CD8-positive, alpha-beta memory T cell (primary cell): ENCODE measurements at regions of chr6 and their contacts with region 1.

Region 1: DNA sequence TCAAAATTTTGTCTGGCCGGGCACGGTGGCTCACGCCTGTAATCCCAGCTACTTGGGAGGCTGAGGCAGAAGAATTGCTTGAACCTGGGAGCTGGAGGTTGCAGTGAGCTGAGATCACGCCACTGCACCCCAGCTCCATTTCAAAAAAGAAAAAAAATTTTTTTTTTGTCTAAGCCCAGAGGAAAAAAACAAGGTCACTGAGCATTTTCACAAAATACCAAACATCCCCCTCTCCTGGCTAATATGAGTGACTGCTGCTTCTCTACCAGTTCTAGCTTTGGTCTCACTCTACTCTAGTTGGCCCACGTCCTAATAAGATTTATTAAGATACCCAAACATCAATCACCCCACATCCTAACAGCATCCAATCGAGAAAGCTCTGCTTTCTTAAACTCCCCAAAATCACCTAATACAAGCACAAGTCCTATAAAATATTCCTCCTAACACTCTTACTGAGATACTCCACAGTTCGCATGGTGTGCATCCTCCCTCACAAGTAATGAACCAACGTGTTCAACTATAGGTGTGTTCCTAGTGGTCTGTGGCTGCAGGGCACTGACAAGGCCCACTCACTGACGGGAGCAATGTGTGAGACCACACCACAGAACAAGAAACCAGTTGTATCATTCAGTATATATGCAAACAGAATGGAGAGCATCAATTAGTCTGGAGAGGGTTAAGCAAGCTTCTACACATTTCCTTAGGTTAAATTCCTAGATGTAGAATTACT is 64.2 kb downstream of the FKBP5 start:
- DNase-seq: peak in 2 of 5 donors; percentile 46 to 70
- H3K4me3 ChIP-seq: no peak overlapping the region
- H3K4me3 Mint-ChIP-seq: peak overlapping the region in 3 of 7 donors; percentile 4 to 42 (median 12)
- H3K27ac ChIP-seq: no peak overlapping the region
- H3K27ac Mint-ChIP-seq: peak overlapping the region in 7 of 8 donors; percentile 6 to 89 (median 80)
- H3K4me1 ChIP-seq: peaks cover 37% of the 10 kb centered on the region
- H3K4me1 Mint-ChIP-seq: peaks cover 26 to 46% (median 26%) of the 10 kb centered on the region in 3 donors
- H3K27me3 ChIP-seq: no peaks in the 10 kb centered on the region
- H3K27me3 Mint-ChIP-seq: no peaks in the 10 kb centered on the region

Region 2: DNA sequence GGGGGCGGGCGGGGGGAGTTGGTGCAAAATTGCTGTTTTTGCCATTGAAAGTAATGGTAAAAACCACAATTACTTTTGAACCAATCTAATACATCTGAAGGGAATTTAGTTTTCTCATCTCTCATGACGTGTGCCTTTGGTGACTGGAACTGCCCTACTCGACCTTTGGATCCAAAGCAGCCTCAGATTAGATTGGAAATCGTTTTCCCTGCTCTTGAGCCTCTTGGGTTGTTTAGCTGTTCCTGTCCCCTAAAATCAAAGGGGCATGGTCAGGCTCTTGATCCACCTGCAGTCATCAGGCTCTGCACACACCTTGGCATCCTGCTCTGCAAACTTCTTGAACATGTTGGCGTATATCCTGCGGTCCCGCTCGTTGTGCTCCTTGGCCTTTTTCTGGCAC is 47.8 kb before region 1 on chr6:
- CTCF ChIA-PET with region 1: interaction called, 144 read pairs
- POLR2A ChIA-PET with region 1: no interaction called
- DNase-seq: no peak
- H3K4me3 ChIP-seq: no peak overlapping the region
- H3K4me3 Mint-ChIP-seq: no peak overlapping the region
- H3K27ac ChIP-seq: no peak overlapping the region
- H3K27ac Mint-ChIP-seq: no peak overlapping the region
- H3K4me1 ChIP-seq: peaks cover 2% of the 10 kb centered on the region
- H3K4me1 Mint-ChIP-seq: peaks cover 0 to 4% (median 4%) of the 10 kb centered on the region in 3 donors
- H3K27me3 ChIP-seq: no peaks in the 10 kb centered on the region
- H3K27me3 Mint-ChIP-seq: no peaks in the 10 kb centered on the region

Region 3: GRCh38 chr6:35583893-35584688 is 40.4 kb before region 1 on chr6:
- CTCF ChIA-PET with region 1: interaction called, 144 read pairs
- POLR2A ChIA-PET with region 1: interaction called, 3 read pairs
- DNase-seq: peak; percentile 55 to 79 (median 64)
- H3K4me3 ChIP-seq: no peak overlapping the region
- H3K4me3 Mint-ChIP-seq: peak overlapping the region in 1 of 7 donors; percentile 7
- H3K27ac ChIP-seq: no peak overlapping the region
- H3K27ac Mint-ChIP-seq: peak overlapping the region; percentile 43 to 77 (median 68)
- H3K4me1 ChIP-seq: peaks cover 65% of the 10 kb centered on the region
- H3K4me1 Mint-ChIP-seq: peaks cover 36 to 58% (median 43%) of the 10 kb centered on the region in 3 donors
- H3K27me3 ChIP-seq: no peaks in the 10 kb centered on the region
- H3K27me3 Mint-ChIP-seq: no peaks in the 10 kb centered on the region

Region 4: GRCh38 chr6:35590622-35591066 is 33.9 kb before region 1 on chr6:
- CTCF ChIA-PET with region 1: interaction called, 144 read pairs
- POLR2A ChIA-PET with region 1: interaction called, 3 read pairs
- DNase-seq: no peak
- H3K4me3 ChIP-seq: no peak overlapping the region
- H3K4me3 Mint-ChIP-seq: peak overlapping the region in 1 of 7 donors; percentile 44
- H3K27ac ChIP-seq: no peak overlapping the region
- H3K27ac Mint-ChIP-seq: peak overlapping the region in 7 of 8 donors; percentile 47 to 85 (median 68)
- H3K4me1 ChIP-seq: peaks cover 93% of the 10 kb centered on the region
- H3K4me1 Mint-ChIP-seq: peaks cover 68 to 92% (median 82%) of the 10 kb centered on the region in 3 donors
- H3K27me3 ChIP-seq: no peaks in the 10 kb centered on the region
- H3K27me3 Mint-ChIP-seq: no peaks in the 10 kb centered on the region

Region 5: GRCh38 chr6:35601331-35602132 is 23.0 kb before region 1 on chr6:
- CTCF ChIA-PET with region 1: interaction called, 139 read pairs
- POLR2A ChIA-PET with region 1: interaction called, 19 read pairs
- DNase-seq: peak; percentile 23 to 92 (median 83)
- H3K4me3 ChIP-seq: peak overlapping the region; percentile 58
- H3K4me3 Mint-ChIP-seq: peak overlapping the region; percentile 76 to 85 (median 81)
- H3K27ac ChIP-seq: peak overlapping the region; percentile 44
- H3K27ac Mint-ChIP-seq: peak overlapping the region; percentile 71 to 97 (median 86)
- H3K4me1 ChIP-seq: peaks cover 83% of the 10 kb centered on the region
- H3K4me1 Mint-ChIP-seq: peaks cover 69 to 92% (median 84%) of the 10 kb centered on the region in 3 donors
- H3K27me3 ChIP-seq: no peaks in the 10 kb centered on the region
- H3K27me3 Mint-ChIP-seq: no peaks in the 10 kb centered on the region

Region 6: GRCh38 chr6:35611240-35611639 is 13.3 kb before region 1 on chr6:
- CTCF ChIA-PET with region 1: interaction called, 32 read pairs
- POLR2A ChIA-PET with region 1: no interaction called
- DNase-seq: peak in 3 of 5 donors; percentile 47 to 58 (median 54)
- H3K4me3 ChIP-seq: peak overlapping the region; percentile 26
- H3K4me3 Mint-ChIP-seq: peak overlapping the region; percentile 3 to 76 (median 69)
- H3K27ac ChIP-seq: no peak overlapping the region
- H3K27ac Mint-ChIP-seq: peak overlapping the region; percentile 75 to 97 (median 88)
- H3K4me1 ChIP-seq: peaks cover 36% of the 10 kb centered on the region
- H3K4me1 Mint-ChIP-seq: peaks cover 38 to 81% (median 70%) of the 10 kb centered on the region in 3 donors
- H3K27me3 ChIP-seq: no peaks in the 10 kb centered on the region
- H3K27me3 Mint-ChIP-seq: no peaks in the 10 kb centered on the region

Region 7: DNA sequence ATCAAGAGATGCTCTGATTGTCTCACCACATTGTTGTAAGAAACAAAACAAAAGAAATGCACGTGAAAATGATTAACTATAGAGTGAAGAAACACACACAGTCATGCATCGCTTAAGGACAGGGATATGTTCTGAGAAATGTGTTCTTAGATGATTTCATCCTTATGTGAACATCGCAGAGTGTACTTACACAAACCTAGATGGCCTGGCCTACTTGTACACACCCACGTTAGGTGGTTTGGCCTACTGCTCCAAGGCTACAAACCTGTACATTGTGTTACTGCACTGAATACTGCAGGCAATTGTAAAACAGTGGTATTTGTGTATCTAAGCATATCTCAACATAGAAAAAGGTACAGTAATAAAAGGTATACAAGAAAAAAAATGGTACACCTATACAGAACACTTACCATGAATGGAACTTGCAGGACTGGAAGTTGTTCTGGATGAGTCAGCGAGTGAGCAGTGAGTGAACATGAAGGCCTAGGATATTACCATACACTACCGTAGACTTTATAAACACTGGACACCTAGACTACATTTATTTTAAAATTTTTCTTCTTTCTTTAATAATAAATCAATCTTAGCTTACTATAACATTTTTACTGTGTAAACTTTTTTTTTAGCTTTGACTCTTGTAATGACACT is 15.6 kb after region 1 on chr6:
- CTCF ChIA-PET with region 1: interaction called, 17 read pairs
- POLR2A ChIA-PET with region 1: no interaction called
- DNase-seq: no peak
- H3K4me3 ChIP-seq: no peak overlapping the region
- H3K4me3 Mint-ChIP-seq: no peak overlapping the region
- H3K27ac ChIP-seq: no peak overlapping the region
- H3K27ac Mint-ChIP-seq: peak overlapping the region in 2 of 8 donors; percentile 58 to 73
- H3K4me1 ChIP-seq: peaks cover 32% of the 10 kb centered on the region
- H3K4me1 Mint-ChIP-seq: peaks cover 31 to 55% (median 46%) of the 10 kb centered on the region in 3 donors
- H3K27me3 ChIP-seq: no peaks in the 10 kb centered on the region
- H3K27me3 Mint-ChIP-seq: no peaks in the 10 kb centered on the region

Region 8: DNA sequence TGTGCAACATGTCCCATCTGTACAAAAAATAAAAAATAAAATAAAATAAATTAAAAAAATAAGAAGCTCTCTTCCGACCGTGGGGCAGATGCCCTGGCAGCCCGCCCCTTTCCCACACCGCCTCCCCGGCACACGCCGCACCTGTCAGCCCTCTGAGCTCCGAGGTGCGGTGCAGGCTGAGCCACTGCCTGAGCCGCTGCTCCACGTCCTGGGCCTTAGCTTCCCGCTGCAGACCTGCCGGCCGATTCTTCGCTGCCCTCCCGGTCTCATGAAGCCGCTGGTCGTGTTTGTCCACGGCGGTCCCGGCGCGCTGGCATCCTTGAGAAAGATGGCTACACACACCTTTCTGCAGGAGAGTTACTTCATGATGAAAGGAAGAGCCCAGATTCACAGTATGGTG is 141.2 kb after region 1 on chr6:
- CTCF ChIA-PET with region 1: no interaction called
- POLR2A ChIA-PET with region 1: no interaction called
- DNase-seq: no peak
- H3K4me3 ChIP-seq: no peak overlapping the region
- H3K4me3 Mint-ChIP-seq: no peak overlapping the region
- H3K27ac ChIP-seq: no peak overlapping the region
- H3K27ac Mint-ChIP-seq: no peak overlapping the region
- H3K4me1 ChIP-seq: no peaks in the 10 kb centered on the region
- H3K4me1 Mint-ChIP-seq: peaks cover 0 to 8% (median 8%) of the 10 kb centered on the region in 3 donors
- H3K27me3 ChIP-seq: peaks cover 6% of the 10 kb centered on the region
- H3K27me3 Mint-ChIP-seq: peaks cover 33% of the 10 kb centered on the region in 2 donors